ENCODE measurements at regions of chr9 and their contacts with region 1.

Region 1: DNA sequence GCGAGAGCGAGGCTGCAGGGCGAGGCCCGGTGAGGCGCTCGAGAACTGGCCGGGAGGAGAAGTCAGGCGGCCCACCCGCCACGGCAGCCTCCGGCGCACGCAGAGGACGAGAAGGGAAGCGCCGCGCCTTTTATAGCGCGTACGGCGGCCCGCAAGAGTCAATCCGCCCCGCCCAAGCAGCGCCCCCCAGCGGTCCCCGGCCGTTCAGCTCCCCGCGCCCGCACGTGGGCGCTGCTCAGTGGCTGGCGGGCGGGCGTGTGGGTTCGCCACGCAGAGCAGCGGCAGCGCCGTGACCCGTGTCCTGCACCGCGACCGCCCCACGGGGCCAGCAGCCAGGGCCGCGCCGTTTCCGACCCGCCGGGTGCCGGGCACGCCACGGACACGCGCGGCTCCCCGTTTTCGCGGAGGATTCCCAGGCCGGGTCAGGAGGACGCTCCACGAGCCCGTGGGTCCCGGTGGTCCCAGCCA is 14.6 kb downstream of the LCN10 start:
- DNase-seq: peak; percentile 97
- H3K4me3 ChIP-seq: peak overlapping the region; percentile 64 to 85 (median 74)
- H3K27ac ChIP-seq: peak overlapping the region; percentile 75 to 83 (median 80)
- H3K4me1 ChIP-seq: peaks cover 37 to 59% (median 49%) of the 10 kb centered on the region in 4 donors
- H3K27me3 ChIP-seq: no peaks in the 10 kb centered on the region
- CTCF ChIP-seq: peak; percentile 90 to 96 (median 96)
- EP300 ChIP-seq: no peak
- POLR2A ChIP-seq: peak; percentile 97

Region 2: DNA sequence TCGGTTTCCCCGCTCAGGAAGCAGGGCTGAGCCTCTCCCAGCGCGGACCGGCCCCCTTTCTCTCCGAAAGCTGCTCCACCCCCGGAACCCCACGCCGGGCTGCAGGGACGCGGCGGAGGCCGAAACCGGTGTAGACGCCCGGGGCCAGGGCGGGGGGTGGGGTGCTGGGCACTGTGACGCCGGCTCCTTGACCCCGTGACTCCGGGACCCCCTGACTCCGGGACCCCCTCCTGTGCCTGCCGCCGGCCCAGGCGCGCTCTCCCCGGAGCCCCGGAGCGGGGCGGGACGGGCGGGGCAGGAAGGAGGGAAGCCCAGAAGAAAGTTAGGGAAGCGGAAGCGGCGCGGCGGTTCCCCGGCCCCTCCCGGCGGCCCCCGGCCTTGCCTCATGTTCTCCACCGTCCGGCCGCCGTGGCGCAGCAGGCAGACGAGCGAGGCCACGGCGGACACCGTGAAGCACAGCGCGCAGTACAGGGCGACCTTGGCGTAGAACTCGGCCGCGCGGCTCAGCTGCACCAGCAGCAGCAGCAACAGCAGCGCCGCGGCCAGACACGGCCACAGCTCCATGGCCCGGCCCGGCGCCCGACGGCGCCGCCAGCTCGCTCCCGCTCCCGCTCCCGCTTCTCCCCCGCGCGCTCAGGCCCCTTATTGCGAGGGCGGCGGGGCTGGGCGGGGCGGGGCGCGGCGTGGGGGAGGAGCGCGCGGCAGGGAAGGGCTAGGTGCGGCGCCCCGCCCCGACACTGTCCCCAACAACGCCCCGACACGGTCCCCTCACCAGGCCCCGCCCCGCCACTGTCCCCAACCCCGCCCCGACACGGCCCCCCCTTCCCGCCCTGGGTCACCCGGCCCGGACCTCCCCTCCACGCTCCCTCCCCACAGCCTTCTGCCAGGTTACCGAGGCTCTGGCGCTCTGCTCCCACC is 41.1 kb before region 1 on chr9 and contains the start of gene AGPAT2:
- intact Hi-C with region 1: loop called (anchors 5 kb)
- DNase-seq: no peak
- H3K4me3 ChIP-seq: peak within 1 kb of the TSS; percentile 68 to 91 (median 78)
- H3K27ac ChIP-seq: peak within 1 kb of the TSS; percentile 75 to 93 (median 82)
- H3K4me1 ChIP-seq: peaks cover 56 to 81% (median 63%) of the 10 kb centered on the region in 4 donors
- H3K27me3 ChIP-seq: no peaks in the 10 kb centered on the region
- CTCF ChIP-seq: peak in 1 of 3 experiments; percentile 2
- EP300 ChIP-seq: no peak
- POLR2A ChIP-seq: peak; percentile 30
- total RNA-seq, gene AGPAT2: 22.0 to 52.8 (median 39.3) TPM

Measured in esophagus muscularis mucosa (tissue), 4 donors.